GM13976 (cell line): ENCODE measurements at regions of chr11 and their contacts with region 1.

Region 1: DNA sequence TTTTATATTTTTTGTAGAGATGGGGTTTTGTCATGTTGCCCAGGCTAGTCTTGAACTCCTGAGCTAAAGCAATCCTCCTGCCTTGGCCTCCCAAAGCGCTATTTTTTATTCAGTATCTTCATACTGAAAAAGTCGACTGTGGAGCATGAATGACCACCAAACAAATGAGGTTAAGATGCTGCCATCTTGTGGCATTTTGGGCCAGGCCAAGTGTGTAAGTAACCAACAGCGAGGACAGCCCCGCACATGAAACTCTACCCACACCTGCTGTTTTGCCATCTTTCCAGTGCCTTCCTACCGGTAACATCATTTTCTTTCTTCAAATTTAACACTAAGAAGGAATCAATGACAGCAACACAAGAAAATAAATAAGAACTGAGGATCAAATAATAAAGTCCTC is 32.2 kb upstream of the AQP11 start:
- DNase-seq: peak; percentile 30
- CTCF ChIP-seq: no peak

Region 2: GRCh38 chr11:77187776-77188632 is 369.6 kb before region 1 on chr11:
- in situ Hi-C with region 1: loop called (anchors 25 kb)
- DNase-seq: peak; percentile 87
- CTCF ChIP-seq: peak; percentile 85

Region 3: DNA sequence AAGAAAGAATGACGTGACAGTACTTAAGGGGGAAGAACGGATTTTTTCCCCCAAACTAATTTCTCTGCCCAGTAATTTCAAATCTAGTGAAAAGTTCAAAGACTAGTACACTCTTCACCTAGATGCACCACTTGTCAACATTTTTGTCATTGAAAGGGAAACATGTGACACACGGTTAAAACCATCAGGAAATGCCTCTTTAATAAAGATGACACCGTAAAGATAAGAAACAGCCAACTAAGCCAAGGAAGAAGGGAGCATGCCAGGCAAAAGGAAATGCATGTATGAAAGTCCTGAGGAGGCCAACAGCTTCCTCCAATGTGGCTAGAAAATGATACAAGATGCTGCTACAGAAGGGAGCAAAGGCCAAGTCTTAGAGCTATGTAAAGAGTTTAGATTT is 213.6 kb after region 1 on chr11:
- in situ Hi-C with region 1: no loop called
- DNase-seq: no peak
- CTCF ChIP-seq: no peak